Testis (tissue), 5 donors: ENCODE measurements at regions of chrX and their contacts with region 1.

Region 1: GRCh38 chrX:72121383-72121782 is 10.3 kb downstream of the RTL5 start:
- DNase-seq: peak; percentile 54
- H3K4me3 ChIP-seq: no peak overlapping the region
- H3K27ac ChIP-seq: no peak overlapping the region
- H3K4me1 ChIP-seq: peaks cover 12% of the 10 kb centered on the region
- H3K27me3 ChIP-seq: no peaks in the 10 kb centered on the region
- CTCF ChIP-seq: no peak
- POLR2A ChIP-seq: no peak

Region 2: DNA sequence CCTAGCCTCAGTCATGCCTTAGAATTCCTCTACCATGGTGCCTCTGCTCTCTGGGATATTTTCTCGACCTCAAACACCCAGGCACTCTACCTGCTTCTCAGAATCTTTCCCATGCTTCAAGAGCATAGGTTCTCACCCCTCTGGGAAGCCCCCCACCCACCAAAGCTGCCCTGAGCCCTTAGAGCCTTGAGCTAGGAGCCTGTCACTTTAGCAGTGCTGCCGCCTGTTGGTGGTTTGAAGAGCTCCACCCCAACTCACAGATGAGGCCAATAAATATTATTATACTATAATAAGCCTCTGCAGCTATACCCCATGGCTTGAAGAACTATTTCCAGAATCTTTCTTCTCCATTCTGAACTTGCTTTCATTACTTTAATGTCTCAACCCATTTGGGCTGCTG is 99.4 kb before region 1 on chrX:
- intact Hi-C with region 1: loop called (anchors 5 kb)
- DNase-seq: no peak
- H3K4me3 ChIP-seq: no peak overlapping the region
- H3K27ac ChIP-seq: no peak overlapping the region
- H3K4me1 ChIP-seq: peaks cover 2% of the 10 kb centered on the region
- H3K27me3 ChIP-seq: no peaks in the 10 kb centered on the region
- CTCF ChIP-seq: no peak
- POLR2A ChIP-seq: no peak

Region 3: GRCh38 chrX:72048968-72049367 is 72.4 kb before region 1 on chrX:
- intact Hi-C with region 1: no loop called
- DNase-seq: no peak
- H3K4me3 ChIP-seq: no peak overlapping the region
- H3K27ac ChIP-seq: no peak overlapping the region
- H3K4me1 ChIP-seq: no peaks in the 10 kb centered on the region
- H3K27me3 ChIP-seq: no peaks in the 10 kb centered on the region
- CTCF ChIP-seq: no peak
- POLR2A ChIP-seq: no peak

Region 4: GRCh38 chrX:72245461-72246089 is 124.2 kb after region 1 on chrX:
- intact Hi-C with region 1: no loop called
- DNase-seq: peak; percentile 66
- H3K4me3 ChIP-seq: no peak overlapping the region
- H3K27ac ChIP-seq: no peak overlapping the region
- H3K4me1 ChIP-seq: no peaks in the 10 kb centered on the region
- H3K27me3 ChIP-seq: no peaks in the 10 kb centered on the region
- CTCF ChIP-seq: peak; percentile 34 to 39 (median 37)
- POLR2A ChIP-seq: no peak

Region 5: GRCh38 chrX:72280321-72280845 is 159.0 kb after region 1 on chrX:
- intact Hi-C with region 1: no loop called
- DNase-seq: peak; percentile 28
- H3K4me3 ChIP-seq: no peak overlapping the region
- H3K27ac ChIP-seq: no peak overlapping the region
- H3K4me1 ChIP-seq: no peaks in the 10 kb centered on the region
- H3K27me3 ChIP-seq: no peaks in the 10 kb centered on the region
- CTCF ChIP-seq: no peak
- POLR2A ChIP-seq: no peak